BJ (cell line): ENCODE measurements at regions of chr3 and their contacts with region 1.

Region 1: GRCh38 chr3:107271787-107272387 is 105.4 kb upstream of the CCDC54 start:
- DNase-seq: no peak
- H3K4me3 ChIP-seq: no peak overlapping the region
- H3K27me3 ChIP-seq: no peaks in the 10 kb centered on the region
- CTCF ChIP-seq: peak; percentile 59

Region 2: GRCh38 chr3:107251819-107252218 is 20.1 kb before region 1 on chr3:
- CTCF ChIA-PET with region 1: interaction called, 11 read pairs
- POLR2A ChIA-PET with region 1: no interaction called
- DNase-seq: no peak
- H3K4me3 ChIP-seq: no peak overlapping the region
- H3K27me3 ChIP-seq: no peaks in the 10 kb centered on the region
- CTCF ChIP-seq: no peak

Region 3: GRCh38 chr3:107284612-107285011 is 12.7 kb after region 1 on chr3:
- CTCF ChIA-PET with region 1: interaction called, 23 read pairs
- POLR2A ChIA-PET with region 1: no interaction called
- DNase-seq: no peak
- H3K4me3 ChIP-seq: no peak overlapping the region
- H3K27me3 ChIP-seq: no peaks in the 10 kb centered on the region
- CTCF ChIP-seq: no peak

Region 4: GRCh38 chr3:107414325-107414964 is 142.6 kb after region 1 on chr3:
- CTCF ChIA-PET with region 1: interaction called, 90 read pairs
- POLR2A ChIA-PET with region 1: no interaction called
- DNase-seq: no peak
- H3K4me3 ChIP-seq: no peak overlapping the region
- H3K27me3 ChIP-seq: no peaks in the 10 kb centered on the region
- CTCF ChIP-seq: no peak

Region 5: DNA sequence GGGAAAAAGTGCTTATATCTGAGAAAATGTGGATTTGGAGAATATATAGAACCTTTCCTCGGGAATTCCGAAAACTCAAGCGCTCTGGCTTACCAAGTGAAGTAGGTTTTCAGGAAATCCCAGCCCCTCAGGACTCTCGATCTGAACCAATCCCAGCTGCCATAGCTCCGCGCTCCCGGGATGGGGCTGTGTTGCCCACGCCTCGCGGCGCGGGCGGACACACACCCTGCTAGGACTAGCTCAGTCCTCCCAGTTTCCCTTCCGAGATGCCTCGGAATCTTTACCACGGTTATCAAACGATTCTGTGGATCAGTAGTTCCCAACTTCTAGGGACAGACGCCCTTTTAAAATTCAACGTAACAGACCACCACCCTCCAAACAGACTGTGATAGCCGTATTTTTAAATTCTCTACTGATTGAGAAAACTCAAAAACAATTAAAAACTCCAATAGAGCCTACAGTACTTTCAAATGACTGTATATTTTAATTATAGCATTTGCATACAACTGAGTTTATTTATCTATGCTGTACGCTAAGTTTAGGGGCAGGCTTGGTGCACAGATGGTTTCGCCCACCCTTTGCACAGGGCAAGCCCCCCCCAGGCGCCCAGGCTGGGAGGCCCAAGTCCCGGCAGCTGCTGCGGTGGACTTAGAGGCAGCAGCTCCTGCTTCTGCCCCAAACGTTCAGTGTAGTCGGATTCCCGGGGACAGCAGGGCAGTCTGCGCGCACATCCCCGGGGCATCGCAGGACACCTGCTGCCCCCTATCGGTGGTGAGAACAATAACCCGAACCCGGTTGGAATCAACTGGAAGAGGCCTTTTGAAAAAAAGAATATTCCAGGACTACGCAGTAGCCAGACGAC is 157.7 kb after region 1 on chr3:
- CTCF ChIA-PET with region 1: interaction called, 113 read pairs
- POLR2A ChIA-PET with region 1: no interaction called
- DNase-seq: peak; percentile 45
- H3K4me3 ChIP-seq: peak overlapping the region; percentile 42
- H3K27me3 ChIP-seq: no peaks in the 10 kb centered on the region
- CTCF ChIP-seq: peak; percentile 92